Naive thymus-derived CD8-positive, alpha-beta T cell (primary cell): ENCODE measurements at regions of chr11 and their contacts with region 1.

Region 1: DNA sequence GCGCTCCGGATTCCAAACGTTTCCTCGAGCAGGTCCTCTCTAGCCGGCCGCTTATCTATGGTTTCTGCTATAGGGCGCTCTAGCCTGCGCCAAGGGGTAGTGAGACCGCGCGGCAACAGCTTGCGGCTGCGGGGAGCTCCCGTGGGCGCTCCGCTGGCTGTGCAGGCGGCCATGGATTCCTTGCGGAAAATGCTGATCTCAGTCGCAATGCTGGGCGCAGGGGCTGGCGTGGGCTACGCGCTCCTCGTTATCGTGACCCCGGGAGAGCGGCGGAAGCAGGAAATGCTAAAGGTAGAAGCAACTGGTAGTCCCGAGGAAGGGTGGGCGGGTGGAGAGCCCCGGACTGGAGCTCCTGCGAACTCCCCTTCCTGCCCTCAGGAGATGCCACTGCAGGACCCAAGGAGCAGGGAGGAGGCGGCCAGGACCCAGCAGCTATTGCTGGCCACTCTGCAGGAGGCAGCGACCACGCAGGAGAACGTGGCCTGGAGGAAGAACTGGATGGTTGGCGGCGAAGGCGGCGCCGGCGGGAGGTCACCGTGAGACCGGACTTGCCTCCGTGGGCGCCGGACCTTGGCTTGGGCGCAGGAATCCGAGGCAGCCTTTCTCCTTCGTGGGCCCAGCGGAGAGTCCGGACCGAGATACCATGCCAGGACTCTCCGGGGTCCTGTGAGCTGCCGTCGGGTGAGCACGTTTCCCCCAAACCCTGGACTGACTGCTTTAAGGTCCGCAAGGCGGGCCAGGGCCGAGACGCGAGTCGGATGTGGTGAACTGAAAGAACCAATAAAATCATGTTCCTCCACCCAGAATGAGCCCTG is at the starts of genes LBHD1 and UQCC3:
- DNase-seq: peak; percentile 52 to 85 (median 68)
- ATAC-seq: peak; percentile 75 to 76
- H3K4me3 Mint-ChIP-seq: peak within 1 kb of the TSS; percentile 96 to 100 (median 98)
- H3K27ac Mint-ChIP-seq: peak within 1 kb of the TSS; percentile 92 to 99 (median 96)
- H3K4me1 Mint-ChIP-seq: peaks cover 22 to 67% (median 50%) of the 10 kb centered on the region in 4 donors
- H3K27me3 Mint-ChIP-seq: no peaks in the 10 kb centered on the region
- polyA plus RNA-seq, gene LBHD1: 2.4 to 8.3 (median 4.4) TPM
- polyA plus RNA-seq, gene UQCC3: 9.1 to 9.7 (median 9.6) TPM

Region 2: DNA sequence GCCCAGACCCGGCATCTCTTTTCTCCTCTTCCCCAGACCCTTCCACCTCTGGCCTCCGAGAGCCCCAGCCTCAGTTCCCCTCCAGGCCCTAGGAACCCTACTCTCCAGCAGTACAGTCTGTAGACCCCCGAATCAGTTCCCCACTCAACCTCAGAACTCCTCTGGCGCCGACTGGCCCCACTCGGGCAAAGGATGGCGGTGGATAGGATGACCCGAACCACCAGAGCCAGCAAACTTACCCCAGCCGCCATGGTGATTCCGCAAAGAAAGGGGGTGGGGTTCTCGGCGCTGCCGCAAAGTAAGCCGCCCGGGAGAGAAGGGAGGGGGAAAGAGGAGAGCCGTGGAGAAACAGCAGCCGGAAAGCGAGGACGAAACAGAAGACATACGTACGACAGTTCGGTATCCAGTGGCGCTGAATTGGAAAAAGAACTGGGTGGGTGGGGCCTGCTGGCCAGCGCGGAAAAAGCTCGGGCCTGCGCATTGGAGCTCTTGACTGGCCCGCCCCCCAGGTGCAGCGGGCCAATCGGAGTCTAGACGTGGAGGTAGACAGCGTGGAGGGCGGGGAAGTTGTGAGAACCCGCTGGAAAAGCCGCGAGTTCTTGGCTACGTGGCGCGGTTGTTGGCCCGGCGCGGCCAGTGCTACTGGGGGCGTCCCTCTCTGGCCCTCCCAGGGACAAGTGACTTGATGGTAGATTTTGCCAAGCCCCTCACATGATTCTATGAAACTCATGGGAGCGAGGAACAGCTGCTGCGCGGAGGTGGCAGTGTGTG is 98.0 kb before region 1 on chr11 and contains the start of gene EEF1G:
- POLR2A ChIA-PET with region 1: interaction called, 13 read pairs
- DNase-seq: peak; percentile 94 to 100 (median 98)
- ATAC-seq: peak; percentile 91 to 92
- H3K4me3 Mint-ChIP-seq: peak within 1 kb of the TSS; percentile 93 to 99 (median 97)
- H3K27ac Mint-ChIP-seq: peak within 1 kb of the TSS; percentile 90 to 99 (median 98)
- H3K4me1 Mint-ChIP-seq: peaks cover 41 to 59% (median 53%) of the 10 kb centered on the region in 4 donors
- H3K27me3 Mint-ChIP-seq: no peaks in the 10 kb centered on the region
- polyA plus RNA-seq, gene EEF1G: 1,637 to 2,152 (median 1,960) TPM